ENCODE measurements at regions of chr21 and their contacts with region 1.

Region 1: GRCh38 chr21:43789276-43790009 is at the start of gene RRP1:
- DNase-seq: peak; percentile 69 to 99
- H3K4me3 ChIP-seq: peak within 1 kb of the TSS; percentile 72 to 92 (median 89)
- H3K27ac ChIP-seq: peak within 1 kb of the TSS; percentile 64
- H3K4me1 ChIP-seq: peaks cover 0 to 12% (median 3%) of the 10 kb centered on the region in 4 experiments; a peak in 4 of 7 replicates
- H3K27me3 ChIP-seq: no peaks in the 10 kb centered on the region; a peak in 1 of 7 replicates
- CTCF ChIP-seq: peak; percentile 95 to 98 (median 97)
- EP300 ChIP-seq: no peak; a peak in 1 of 3 replicates
- POLR2A ChIP-seq: peak; percentile 76 to 90
- RAD21 ChIP-seq: peak; percentile 19 to 47; a peak in 2 of 4 replicates
- total RNA-seq, gene RRP1: 54.3 and 55.2 TPM in 2 replicates

Region 2: GRCh38 chr21:43767984-43768867 is 21.2 kb before region 1 on chr21:
- CTCF ChIA-PET with region 1: interaction called, 9 read pairs
- POLR2A ChIA-PET with region 1: interaction called, 12 read pairs
- DNase-seq: peak in 1 of 2 experiments; percentile 56
- H3K4me3 ChIP-seq: no peak overlapping the region
- H3K27ac ChIP-seq: peak overlapping the region; percentile 4; the same call in 1 of the 2 replicates
- H3K4me1 ChIP-seq: peaks cover 0 to 21% (median 15%) of the 10 kb centered on the region in 4 experiments; a peak in 6 of 7 replicates
- H3K27me3 ChIP-seq: no peaks in the 10 kb centered on the region
- CTCF ChIP-seq: no peak
- EP300 ChIP-seq: no peak
- POLR2A ChIP-seq: no peak
- RAD21 ChIP-seq: no peak

Region 3: GRCh38 chr21:43810505-43811261 is 21.2 kb after region 1 on chr21:
- CTCF ChIA-PET with region 1: interaction called, 6 read pairs
- POLR2A ChIA-PET with region 1: interaction called, 80 read pairs
- DNase-seq: peak; percentile 41 to 100
- H3K4me3 ChIP-seq: no peak overlapping the region; a peak in 1 of 8 replicates
- H3K27ac ChIP-seq: no peak overlapping the region
- H3K4me1 ChIP-seq: peaks cover 0 to 15% (median 12%) of the 10 kb centered on the region in 4 experiments; a peak in 6 of 7 replicates
- H3K27me3 ChIP-seq: no peaks in the 10 kb centered on the region
- CTCF ChIP-seq: peak in 2 of 3 experiments; percentile 92 to 97; a peak in 3 of 4 replicates
- EP300 ChIP-seq: no peak
- POLR2A ChIP-seq: no peak
- RAD21 ChIP-seq: peak; percentile 97 to 99

Region 4: GRCh38 chr21:43816611-43817478 is 27.4 kb after region 1 on chr21:
- CTCF ChIA-PET with region 1: interaction called, 10 read pairs
- POLR2A ChIA-PET with region 1: interaction called, 80 read pairs
- DNase-seq: no peak
- H3K4me3 ChIP-seq: no peak overlapping the region
- H3K27ac ChIP-seq: no peak overlapping the region
- H3K4me1 ChIP-seq: peaks cover 0 to 9% (median 8%) of the 10 kb centered on the region in 4 experiments; a peak in 6 of 7 replicates
- H3K27me3 ChIP-seq: no peaks in the 10 kb centered on the region
- CTCF ChIP-seq: peak in 2 of 3 experiments; percentile 59 to 75; a peak in 3 of 4 replicates
- EP300 ChIP-seq: no peak
- POLR2A ChIP-seq: no peak
- RAD21 ChIP-seq: peak; percentile 35 to 44; a peak in 3 of 4 replicates

Region 5: DNA sequence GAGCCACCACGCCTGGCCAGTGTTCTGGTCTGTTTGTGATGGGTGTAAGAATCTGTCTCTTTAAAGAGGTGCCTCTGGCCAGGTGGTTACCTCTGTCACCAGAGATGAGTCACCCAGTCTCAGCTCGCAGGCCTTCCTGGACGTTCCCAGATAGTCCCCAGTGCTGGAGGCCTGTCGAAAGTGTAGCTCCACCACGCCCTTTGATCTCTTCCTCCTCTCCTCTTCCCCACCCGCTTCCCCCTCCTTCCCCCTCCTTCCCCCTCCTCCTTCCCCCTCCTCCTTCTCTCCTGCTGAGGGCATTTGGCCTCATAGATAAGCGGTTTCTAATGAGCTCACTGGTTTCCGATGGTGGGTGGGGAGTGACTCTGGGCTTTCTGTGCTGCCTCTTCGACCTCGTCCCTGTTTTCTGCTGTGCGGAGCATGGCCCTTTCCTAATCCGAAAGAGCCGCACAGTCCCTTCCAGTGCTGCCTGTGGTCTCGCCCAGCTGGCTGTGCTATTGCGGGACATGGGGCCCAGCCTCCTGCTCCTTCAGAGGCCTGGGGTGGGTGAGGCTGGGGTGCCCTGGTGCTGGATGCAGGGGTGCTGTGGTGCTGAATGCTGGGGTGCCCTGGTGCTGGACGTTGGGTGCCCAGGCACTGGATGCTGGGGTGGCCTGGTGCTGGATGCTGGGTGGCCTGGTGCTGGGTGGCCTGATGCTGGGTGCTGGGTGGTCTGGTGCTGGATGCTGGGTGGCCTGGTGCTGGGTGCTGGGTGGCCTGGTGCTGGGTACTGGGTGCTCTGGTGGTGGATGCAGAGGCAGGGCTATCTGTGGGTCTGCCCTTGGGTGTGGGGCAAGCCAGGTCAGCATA is 94.8 kb after region 1 on chr21:
- CTCF ChIA-PET with region 1: no interaction called
- POLR2A ChIA-PET with region 1: no interaction called
- DNase-seq: no peak
- H3K4me3 ChIP-seq: no peak overlapping the region
- H3K27ac ChIP-seq: no peak overlapping the region
- H3K4me1 ChIP-seq: peaks cover 0 to 14% (median 8%) of the 10 kb centered on the region in 4 experiments; a peak in 6 of 7 replicates
- H3K27me3 ChIP-seq: no peaks in the 10 kb centered on the region
- CTCF ChIP-seq: no peak
- EP300 ChIP-seq: no peak
- POLR2A ChIP-seq: no peak
- RAD21 ChIP-seq: no peak